ENCODE measurements at regions of chr12 and their contacts with region 1.

Region 1: DNA sequence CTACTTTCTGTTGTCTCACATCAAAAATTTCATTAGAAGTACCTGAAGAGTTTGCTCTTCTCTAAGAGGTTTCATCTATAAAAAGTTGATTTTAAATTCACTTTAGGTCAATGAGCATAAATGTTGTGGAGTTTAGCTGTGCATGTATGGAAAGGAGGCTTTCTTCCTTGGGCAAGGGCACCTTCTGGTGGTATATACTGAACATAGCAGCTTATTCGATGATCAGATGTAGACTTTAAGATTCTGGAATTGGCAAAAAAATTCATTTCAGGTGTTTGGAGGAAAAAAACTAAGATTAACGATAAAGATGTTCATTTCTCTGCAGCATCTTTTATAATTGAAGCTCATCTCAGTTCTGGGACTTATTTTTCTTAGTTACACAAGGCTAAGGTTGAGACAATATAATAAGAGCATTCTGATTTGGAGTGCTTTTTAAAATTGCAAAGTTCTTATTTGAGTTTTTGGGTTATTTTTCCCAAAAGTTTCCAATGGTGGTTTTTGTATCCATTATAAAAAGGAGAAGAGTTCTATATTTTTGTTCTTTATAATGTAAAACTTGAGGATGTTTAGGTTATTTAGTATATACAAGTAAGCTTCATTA is 46.8 kb downstream of the TMEM117 start:
- DNase-seq: peak; percentile 50
- CTCF ChIP-seq: peak; percentile 81

Region 2: DNA sequence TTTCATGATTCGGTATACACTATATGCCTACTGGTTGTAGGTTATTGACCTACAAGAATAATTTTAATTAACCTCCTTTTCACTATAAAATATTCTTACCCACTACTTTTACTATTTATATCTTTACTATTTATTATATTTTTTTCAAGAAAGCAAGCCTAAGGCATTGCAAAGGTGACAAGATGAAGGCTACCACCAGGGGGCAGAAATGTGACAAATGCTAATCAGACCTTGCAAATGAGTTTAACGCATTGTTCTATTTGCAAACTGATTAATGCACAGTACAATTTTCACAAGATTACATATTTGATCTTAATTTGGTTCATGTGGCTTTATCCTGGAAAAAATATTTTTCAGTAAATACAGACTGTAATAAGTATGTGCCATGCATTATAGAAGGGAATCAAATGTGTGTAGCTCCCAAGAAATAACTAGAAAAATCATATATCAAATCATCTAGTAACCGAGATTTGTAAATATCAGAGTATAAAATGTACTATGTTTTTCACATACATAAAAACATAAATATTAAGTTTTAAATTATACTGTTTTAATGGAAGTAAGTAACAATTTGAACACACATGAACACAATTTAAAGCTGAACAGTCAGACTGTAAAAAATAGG is 437.6 kb before region 1 on chr12:
- in situ Hi-C with region 1: loop called (anchors 10 kb)
- DNase-seq: peak; percentile 15
- CTCF ChIP-seq: peak; percentile 71

Region 3: GRCh38 chr12:43789941-43790340 is 92.7 kb before region 1 on chr12:
- in situ Hi-C with region 1: loop called (anchors 10 kb)
- DNase-seq: no peak
- CTCF ChIP-seq: no peak

Region 4: GRCh38 chr12:44229846-44230245 is 347.2 kb after region 1 on chr12:
- in situ Hi-C with region 1: no loop called
- DNase-seq: no peak
- CTCF ChIP-seq: no peak